Panc1 (cell line): ENCODE measurements at regions of chr1 and their contacts with region 1.

Region 1: GRCh38 chr1:154974063-154974807 is at the start of gene CKS1B:
- DNase-seq: peak; percentile 99
- ATAC-seq: peak; percentile 81
- H3K4me3 ChIP-seq: peak within 1 kb of the TSS; percentile 77 to 88
- H3K27ac ChIP-seq: peak within 1 kb of the TSS; percentile 98
- H3K4me1 ChIP-seq: peaks cover 44% of the 10 kb centered on the region
- H3K27me3 ChIP-seq: no peaks in the 10 kb centered on the region
- CTCF ChIP-seq: no peak
- total RNA-seq, gene CKS1B: 212 TPM

Region 2: DNA sequence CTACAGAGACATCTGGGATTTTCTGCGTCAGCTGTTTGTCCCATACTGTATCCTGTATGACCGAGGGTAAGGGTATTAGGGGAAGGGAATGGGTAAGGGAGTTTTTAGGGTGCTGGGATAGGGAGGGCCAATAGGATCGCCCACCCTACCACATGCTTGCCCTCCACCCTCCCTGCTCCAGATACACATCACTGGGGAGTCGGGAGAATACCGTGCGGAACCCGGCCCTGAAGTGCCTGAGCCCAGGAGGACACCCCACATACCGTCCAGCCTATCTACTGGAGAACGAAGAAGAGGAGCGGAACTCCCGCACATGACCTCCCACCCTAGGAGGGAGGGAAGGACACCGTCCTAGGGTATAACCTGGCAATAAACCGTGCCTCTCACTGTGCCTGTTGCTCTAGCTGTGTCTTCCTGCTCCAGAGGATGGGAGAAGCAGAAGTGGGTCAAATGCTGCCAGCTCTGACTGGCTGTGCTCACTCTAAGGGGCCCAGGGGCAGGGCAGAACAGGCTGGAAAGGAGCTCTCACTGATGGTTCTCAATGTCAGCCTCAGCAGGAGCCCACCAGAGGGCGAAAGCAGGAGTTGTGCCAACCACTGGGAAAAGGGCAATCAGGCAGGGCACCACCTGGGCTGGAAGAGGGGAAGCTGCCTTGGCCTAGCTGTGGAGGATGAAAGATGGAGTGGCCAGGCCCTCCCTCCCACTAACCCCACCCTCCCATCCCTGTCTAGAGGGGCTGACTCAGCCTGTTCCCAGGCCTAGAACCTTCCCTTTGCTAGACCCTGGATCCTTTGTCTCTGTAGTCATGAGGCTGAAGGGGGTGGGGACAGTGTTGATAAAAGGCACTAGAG is 18.7 kb after region 1 on chr1:
- CTCF ChIA-PET with region 1: interaction called, 17 read pairs
- POLR2A ChIA-PET with region 1: interaction called, 15 read pairs
- in situ Hi-C with region 1: no loop called
- intact Hi-C with region 1: no loop called
- DNase-seq: no peak
- ATAC-seq: peak; percentile 54
- H3K4me3 ChIP-seq: no peak overlapping the region
- H3K27ac ChIP-seq: no peak overlapping the region
- H3K4me1 ChIP-seq: peaks cover 8% of the 10 kb centered on the region
- H3K27me3 ChIP-seq: no peaks in the 10 kb centered on the region
- CTCF ChIP-seq: no peak; the same call in 1 of the 2 replicates

Region 3: DNA sequence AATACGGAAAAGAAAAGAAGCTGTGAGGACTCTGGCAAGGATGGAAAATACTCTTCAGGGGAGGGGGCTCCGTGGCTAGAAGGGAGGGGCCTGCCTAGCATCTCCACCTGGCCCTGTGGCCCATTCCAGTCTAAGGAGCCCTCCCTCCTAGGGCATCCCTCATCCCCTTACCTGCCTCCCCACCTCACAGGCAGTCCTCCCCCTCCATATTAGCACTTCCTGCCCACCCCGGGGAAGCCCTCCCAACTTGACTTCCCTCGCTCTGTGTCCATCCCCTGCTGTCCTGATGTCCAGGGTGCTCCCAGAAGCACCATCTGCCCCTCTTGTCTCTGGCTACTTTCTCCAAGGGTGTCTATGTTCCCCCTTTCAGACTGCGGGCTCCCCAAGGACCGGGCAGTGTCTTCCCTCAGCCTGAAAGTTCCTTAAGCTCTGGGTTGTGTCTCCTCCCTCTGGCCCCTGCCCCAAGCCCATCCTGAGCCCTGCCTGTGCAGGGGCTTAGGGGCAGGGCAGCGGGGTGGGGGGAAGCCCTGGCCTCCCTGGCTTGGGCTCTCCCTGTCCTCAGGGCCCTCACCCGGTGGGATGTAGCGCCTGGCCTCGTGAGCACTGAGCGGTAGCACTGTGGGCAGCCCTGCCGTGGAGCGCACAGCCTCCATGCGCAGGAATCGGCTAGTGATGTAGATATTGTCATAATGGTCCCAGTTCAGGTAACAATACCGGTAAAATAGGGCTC is 55.4 kb after region 1 on chr1:
- CTCF ChIA-PET with region 1: interaction called, 4 read pairs
- POLR2A ChIA-PET with region 1: interaction called, 15 read pairs
- in situ Hi-C with region 1: no loop called
- intact Hi-C with region 1: no loop called
- DNase-seq: no peak
- ATAC-seq: no peak
- H3K4me3 ChIP-seq: no peak overlapping the region
- H3K27ac ChIP-seq: no peak overlapping the region
- H3K4me1 ChIP-seq: no peaks in the 10 kb centered on the region
- H3K27me3 ChIP-seq: no peaks in the 10 kb centered on the region
- CTCF ChIP-seq: no peak